Transverse colon (tissue), 4 donors: ENCODE measurements at regions of chr9 and their contacts with region 1.

Region 1: GRCh38 chr9:133184962-133185361 is 21.2 kb upstream of the GBGT1 start:
- DNase-seq: peak; percentile 42
- H3K4me3 ChIP-seq: no peak overlapping the region
- H3K27ac ChIP-seq: no peak overlapping the region
- H3K4me1 ChIP-seq: peaks cover 0 to 10% (median 2%) of the 10 kb centered on the region in 4 donors
- H3K27me3 ChIP-seq: peaks cover 19% of the 10 kb centered on the region
- CTCF ChIP-seq: peak; percentile 52 to 77 (median 55)
- EP300 ChIP-seq: no peak
- POLR2A ChIP-seq: no peak

Region 2: DNA sequence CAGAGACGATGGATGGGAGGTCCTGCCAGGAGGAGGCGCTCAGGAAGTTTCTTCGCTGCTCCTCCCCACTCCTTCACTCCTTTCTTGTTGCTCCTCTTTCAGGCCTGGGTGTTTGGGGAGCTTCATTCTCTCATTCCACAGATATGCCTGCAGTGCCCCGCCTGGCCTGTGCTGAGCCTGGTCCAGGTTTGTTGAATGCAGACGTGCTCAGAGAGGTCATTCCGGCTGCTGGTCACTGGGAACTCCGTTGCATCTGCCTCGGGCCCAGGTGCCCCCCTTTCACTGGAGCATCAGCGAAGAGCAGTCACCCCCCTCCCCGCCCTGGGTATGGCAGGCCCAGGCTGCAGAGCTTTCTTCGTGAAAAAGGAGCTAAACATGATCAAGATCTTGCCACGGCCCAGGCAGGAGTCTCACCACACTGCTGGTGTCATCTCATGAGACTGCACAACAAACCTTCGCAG is 135.5 kb after region 1 on chr9:
- in situ Hi-C with region 1: loop called in 3 of 4 experiments (anchors 5 to 10 kb)
- intact Hi-C with region 1: no loop called
- DNase-seq: no peak
- H3K4me3 ChIP-seq: no peak overlapping the region
- H3K27ac ChIP-seq: no peak overlapping the region
- H3K4me1 ChIP-seq: no peaks in the 10 kb centered on the region
- H3K27me3 ChIP-seq: no peaks in the 10 kb centered on the region
- CTCF ChIP-seq: no peak
- EP300 ChIP-seq: no peak
- POLR2A ChIP-seq: no peak

Region 3: DNA sequence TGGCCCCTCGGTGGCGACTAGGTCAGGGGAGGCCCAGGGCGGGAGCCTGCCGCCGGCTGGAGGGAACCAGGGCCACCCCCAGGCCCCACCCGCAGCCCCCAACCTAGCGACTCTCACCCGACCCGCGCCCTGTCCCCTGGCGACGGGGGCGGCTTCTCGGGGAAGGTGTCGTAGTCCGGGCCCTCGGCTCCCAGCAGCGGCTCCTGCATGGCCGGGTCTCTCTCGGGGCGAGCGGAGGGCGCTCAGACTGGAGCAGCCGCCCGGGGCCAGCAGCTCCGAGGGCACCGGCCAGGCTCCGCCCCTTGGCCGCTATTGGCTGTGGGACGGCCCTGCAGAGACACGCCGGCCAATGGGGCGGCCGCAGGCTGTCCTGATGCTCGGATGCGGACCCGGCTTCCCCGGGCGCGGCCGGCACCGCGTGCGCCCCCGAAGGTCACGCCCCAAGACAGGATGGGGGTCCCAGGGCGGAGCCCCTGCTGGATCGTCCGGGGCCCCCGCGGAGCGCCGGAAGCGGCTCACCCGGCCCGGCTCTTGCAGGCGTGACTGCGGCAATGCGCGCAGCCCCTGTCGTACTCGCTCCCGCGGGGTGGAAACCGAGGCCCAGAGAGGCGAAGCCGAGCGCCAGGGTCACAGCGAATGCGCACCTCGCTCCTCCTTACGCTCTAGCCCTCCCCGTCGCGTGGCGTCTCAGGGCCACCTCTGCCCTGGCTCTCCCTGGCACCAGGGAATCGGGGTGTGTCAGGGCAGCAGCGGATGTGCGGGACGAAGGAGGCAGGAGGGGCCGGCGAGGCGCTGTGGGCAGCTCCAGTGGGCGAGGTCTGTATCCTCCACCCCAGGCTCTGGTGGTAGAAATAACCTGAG is 294.1 kb after region 1 on chr9 and contains the start of gene SLC2A6:
- in situ Hi-C with region 1: loop called (anchors 10 to 25 kb)
- intact Hi-C with region 1: loop called (anchors 10 kb)
- DNase-seq: peak; percentile 86
- H3K4me3 ChIP-seq: peak within 1 kb of the TSS; percentile 23 to 52 (median 40)
- H3K27ac ChIP-seq: peak within 1 kb of the TSS; percentile 53 to 74 (median 57)
- H3K4me1 ChIP-seq: peaks cover 7 to 20% (median 16%) of the 10 kb centered on the region in 4 donors
- H3K27me3 ChIP-seq: peaks cover 21% of the 10 kb centered on the region
- CTCF ChIP-seq: no peak
- EP300 ChIP-seq: no peak
- POLR2A ChIP-seq: peak; percentile 10
- total RNA-seq, gene SLC2A6: 0.96 to 20.1 (median 3.4) TPM

Region 4: DNA sequence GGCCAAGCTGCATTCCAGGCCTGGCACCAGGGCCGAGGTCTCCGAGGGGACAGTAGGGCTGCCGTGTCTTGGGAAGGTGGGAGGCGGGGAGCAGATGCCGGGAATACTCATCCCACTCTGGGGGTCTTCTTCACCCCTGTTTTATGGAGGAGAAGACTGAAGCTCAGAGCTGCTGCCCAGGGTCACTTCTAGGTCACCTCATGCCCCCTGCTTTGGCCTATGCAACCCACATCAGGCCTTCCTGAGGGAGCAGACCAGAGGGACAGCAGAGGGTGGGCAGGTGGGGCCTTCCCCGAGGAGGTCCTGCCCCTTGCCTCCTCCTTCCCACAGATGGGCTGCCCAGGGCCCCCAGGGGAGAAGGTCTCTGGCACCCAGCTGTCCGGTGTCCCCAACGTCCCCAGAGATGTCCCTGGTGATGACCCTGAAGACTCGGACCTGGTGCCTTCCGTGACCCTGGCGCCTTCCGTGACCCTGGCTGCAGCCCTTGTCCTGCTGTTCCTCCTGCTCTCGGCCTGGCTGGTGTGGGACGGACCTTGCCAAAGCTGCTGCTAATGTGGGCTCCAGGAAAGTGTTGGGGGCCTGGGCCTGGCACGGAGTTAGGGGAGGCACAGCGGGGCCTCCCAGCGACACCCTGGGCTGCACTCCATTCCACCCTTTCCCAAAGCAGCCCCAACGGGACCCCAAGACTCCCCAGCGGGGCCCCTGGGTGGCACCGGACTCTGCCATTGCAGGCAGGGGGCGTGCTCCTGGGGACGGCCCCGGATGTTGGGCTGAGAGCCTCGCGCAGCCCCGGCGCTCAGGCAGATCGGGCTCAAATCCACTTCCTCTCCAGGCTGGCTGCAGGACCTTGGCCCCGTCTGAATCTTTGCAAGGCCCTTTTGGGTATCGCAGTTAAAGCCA is 300.6 kb after region 1 on chr9:
- in situ Hi-C with region 1: loop called (anchors 10 to 25 kb)
- intact Hi-C with region 1: loop called (anchors 10 kb)
- DNase-seq: no peak
- H3K4me3 ChIP-seq: no peak overlapping the region
- H3K27ac ChIP-seq: no peak overlapping the region
- H3K4me1 ChIP-seq: peaks cover 0 to 5% (median 2%) of the 10 kb centered on the region in 4 donors
- H3K27me3 ChIP-seq: peaks cover 21% of the 10 kb centered on the region
- CTCF ChIP-seq: no peak
- EP300 ChIP-seq: no peak
- POLR2A ChIP-seq: no peak